HEK293 (cell line): ENCODE measurements at regions of chr6 and their contacts with region 1.

Region 1: DNA sequence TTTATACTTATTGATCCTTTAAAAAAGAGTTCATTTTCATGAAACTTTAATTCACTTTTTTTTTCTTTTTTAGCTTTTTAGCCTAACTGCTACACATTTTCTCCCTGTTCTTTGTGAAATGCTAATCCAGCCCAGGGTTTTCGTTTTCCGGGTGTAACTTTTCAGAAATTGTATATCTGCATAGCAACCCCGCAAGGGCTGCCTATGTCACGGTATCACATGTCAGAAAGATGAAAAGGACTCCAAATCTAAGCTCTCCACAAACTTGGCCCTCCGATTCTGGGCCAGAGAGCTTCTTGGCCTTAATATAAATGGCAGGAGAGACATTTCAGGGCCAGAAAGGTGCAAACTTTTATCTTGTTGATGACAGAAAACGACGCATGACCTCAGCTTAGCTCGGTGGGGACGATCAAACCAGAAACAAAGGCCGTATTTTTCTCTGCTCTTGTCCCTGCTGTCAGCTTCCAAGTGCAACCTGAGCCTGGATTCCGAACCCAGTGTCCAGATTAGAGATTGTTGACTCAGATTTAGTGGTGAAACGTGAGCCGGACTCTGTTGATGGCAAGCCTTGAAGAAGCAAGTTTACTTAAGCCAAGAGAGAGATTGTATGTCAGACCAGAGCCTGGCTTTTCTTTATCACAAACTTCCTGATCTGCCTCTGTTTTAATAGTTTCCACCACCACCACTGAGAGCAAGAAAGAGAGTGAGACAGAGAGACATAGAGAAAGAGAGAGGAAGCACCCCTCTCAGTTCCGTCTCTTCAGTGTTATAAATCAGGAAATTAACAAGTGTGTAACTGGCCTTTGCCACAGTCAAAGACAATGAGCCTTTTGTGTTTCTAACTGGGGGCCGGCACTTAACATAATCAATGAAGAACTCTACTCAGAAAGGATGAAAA is 157.8 kb downstream of the SCML4 start:
- H3K4me3 ChIP-seq: no peak overlapping the region
- H3K27ac ChIP-seq: peak overlapping the region; percentile 94
- H3K4me1 ChIP-seq: peaks cover 35% of the 10 kb centered on the region
- CTCF ChIP-seq: no peak

Region 2: GRCh38 chr6:106908386-106908840 is 757.9 kb before region 1 on chr6:
- CTCF ChIA-PET with region 1: no interaction called
- POLR2A ChIA-PET with region 1: no interaction called
- H3K4me3 ChIP-seq: no peak overlapping the region
- H3K27ac ChIP-seq: no peak overlapping the region
- H3K4me1 ChIP-seq: no peaks in the 10 kb centered on the region; the same call in 1 of the 2 replicates
- CTCF ChIP-seq: no peak

Region 3: DNA sequence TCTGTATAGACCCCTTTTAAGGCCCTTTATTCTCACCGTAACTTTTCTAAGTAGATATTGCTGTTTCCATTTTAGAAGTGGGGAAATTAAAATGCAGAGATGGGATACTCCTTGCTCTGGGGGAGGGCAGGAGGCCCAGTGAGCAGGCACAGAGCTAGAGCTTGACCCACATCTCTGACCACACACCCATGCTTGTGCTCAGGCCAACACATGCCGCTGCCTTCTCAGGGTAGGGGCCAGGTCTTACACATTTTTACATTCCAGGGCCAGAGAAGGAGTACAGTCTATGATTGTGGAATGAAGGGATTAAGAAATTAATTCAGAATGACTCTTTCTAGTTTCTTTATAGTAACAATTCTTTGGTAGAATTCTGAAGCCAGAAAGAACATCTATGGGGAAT is 71.6 kb before region 1 on chr6:
- CTCF ChIA-PET with region 1: no interaction called
- POLR2A ChIA-PET with region 1: no interaction called
- H3K4me3 ChIP-seq: no peak overlapping the region
- H3K27ac ChIP-seq: no peak overlapping the region
- H3K4me1 ChIP-seq: no peaks in the 10 kb centered on the region
- CTCF ChIP-seq: no peak

Region 4: DNA sequence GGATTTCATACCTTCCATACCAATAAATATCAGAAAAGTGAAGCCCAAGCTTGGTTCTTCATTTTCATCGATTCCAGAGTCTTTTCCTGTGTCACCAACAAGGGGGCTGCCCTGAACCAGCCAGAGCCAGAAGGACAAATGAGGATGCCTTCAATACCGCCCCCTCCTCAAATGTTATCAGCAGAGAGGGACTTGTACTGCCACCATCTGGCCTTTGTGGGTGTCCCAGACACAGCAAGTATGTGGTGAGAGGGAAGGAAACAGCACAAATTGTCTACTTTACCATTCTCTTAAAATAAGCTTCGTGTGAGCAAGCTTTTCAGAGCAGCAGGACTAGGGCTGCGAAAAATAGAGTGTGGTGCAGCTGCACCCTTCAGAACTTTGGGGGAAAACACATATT is 11.1 kb before region 1 on chr6:
- CTCF ChIA-PET with region 1: interaction called, 14 read pairs
- POLR2A ChIA-PET with region 1: interaction called, 6 read pairs
- H3K4me3 ChIP-seq: no peak overlapping the region
- H3K27ac ChIP-seq: no peak overlapping the region
- H3K4me1 ChIP-seq: peaks cover 38% of the 10 kb centered on the region
- CTCF ChIP-seq: peak; percentile 37; the same call in 1 of the 2 replicates